ENCODE measurements at regions of chr3 and their contacts with region 1.

Region 1: GRCh38 chr3:51384726-51385473 is at the start of gene MANF:
- DNase-seq: peak; percentile 99
- H3K4me3 Mint-ChIP-seq: peak within 1 kb of the TSS; percentile 97
- H3K27ac Mint-ChIP-seq: peak within 1 kb of the TSS; percentile 98
- H3K4me1 Mint-ChIP-seq: peaks cover 47% of the 10 kb centered on the region
- H3K27me3 Mint-ChIP-seq: no peaks in the 10 kb centered on the region
- total RNA-seq, gene MANF: 91.7 to 108 TPM

Region 2: DNA sequence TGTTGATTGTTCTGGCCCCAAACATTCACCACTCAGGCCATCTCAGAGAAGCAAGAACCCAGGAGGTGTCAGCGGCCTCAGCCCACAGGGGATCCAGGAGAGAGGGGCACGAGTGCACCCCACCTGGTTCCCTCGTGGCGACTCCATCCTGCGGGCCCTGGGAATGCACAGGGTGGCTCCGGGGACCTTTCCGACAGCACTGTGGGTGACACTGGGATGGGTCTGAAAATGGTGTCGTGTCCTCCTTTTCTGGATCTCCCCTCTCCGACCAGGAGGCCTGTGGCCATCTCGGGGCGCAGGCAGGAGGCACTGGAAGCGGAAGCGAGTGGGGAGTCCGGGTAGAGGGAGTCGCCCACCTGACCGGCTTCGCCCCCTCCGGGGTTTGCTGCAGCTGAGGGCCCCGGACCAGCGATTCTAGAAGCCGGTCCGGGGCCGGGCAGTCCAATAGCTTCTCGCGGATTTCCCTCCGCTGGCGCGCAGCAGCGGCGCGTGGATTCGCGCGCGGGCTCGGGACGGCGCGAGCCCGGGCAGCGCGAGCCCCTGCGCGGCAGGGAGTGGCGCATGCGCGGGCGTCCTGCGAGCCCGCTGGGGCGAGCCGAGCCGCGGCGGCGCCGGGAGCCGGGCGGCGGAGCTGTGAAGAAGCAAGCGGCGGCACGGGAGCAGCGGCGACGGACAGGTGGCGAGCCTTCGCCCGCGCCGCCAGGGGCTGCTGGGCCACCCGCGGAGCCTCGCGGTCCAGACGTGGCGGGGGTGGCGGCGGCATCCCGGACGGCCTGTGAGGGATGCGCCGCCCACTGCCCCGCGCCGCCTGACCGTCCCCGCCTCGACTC is 710.3 kb before region 1 on chr3 and contains the start of gene DOCK3:
- CTCF ChIA-PET with region 1: interaction called, 3 read pairs
- intact Hi-C with region 1: loop called (anchors 5 kb)
- DNase-seq: peak; percentile 57
- H3K4me3 Mint-ChIP-seq: peak within 1 kb of the TSS; percentile 64
- H3K27ac Mint-ChIP-seq: peak within 1 kb of the TSS; percentile 9
- H3K4me1 Mint-ChIP-seq: peaks cover 7% of the 10 kb centered on the region
- H3K27me3 Mint-ChIP-seq: peaks cover 37% of the 10 kb centered on the region
- total RNA-seq, gene DOCK3: 1.6 to 1.7 TPM

Region 3: GRCh38 chr3:51269466-51269865 is 115.4 kb before region 1 on chr3:
- CTCF ChIA-PET with region 1: no interaction called
- intact Hi-C with region 1: loop called (anchors 5 kb)
- DNase-seq: no peak
- H3K4me3 Mint-ChIP-seq: no peak overlapping the region
- H3K27ac Mint-ChIP-seq: no peak overlapping the region
- H3K4me1 Mint-ChIP-seq: peaks cover 25% of the 10 kb centered on the region
- H3K27me3 Mint-ChIP-seq: no peaks in the 10 kb centered on the region

Region 4: GRCh38 chr3:51538459-51539290 is 153.8 kb after region 1 on chr3 and contains the start of gene RAD54L2:
- CTCF ChIA-PET with region 1: no interaction called
- intact Hi-C with region 1: loop called (anchors 2 kb)
- DNase-seq: peak; percentile 83
- H3K4me3 Mint-ChIP-seq: peak within 1 kb of the TSS; percentile 91
- H3K27ac Mint-ChIP-seq: peak within 1 kb of the TSS; percentile 89
- H3K4me1 Mint-ChIP-seq: peaks cover 34% of the 10 kb centered on the region
- H3K27me3 Mint-ChIP-seq: no peaks in the 10 kb centered on the region
- total RNA-seq, gene RAD54L2: 23.1 to 24.5 TPM

Measured in activated naive CD4-positive, alpha-beta T cell treated with anti-CD3 and anti-CD28 coated beads for 36 hours (primary cell).